Dorsolateral prefrontal cortex (tissue), 120 donors: ENCODE measurements at regions of chr5 and their contacts with region 1.

Region 1: DNA sequence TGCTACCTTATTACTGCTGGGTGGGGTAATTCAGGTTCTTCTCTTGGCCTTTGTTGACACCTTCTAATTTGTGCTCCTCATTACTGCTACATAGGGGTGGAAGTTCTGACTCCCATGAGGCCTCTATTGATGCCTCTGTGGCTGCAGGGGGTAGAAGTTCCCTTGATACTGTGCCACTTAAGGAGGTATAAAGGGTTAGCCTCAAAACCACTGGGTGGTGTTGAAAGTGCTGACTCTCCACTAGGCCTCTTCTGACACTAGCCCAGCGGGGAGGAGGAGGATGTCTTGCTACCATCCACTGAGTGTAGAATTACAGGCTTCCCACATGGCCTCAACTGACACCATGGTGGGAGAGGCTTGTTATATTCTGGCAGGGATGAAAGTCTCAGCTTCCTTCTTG is 36.7 kb upstream of the CCDC112 start:
- DNase-seq: no peak
- H3K4me3 ChIP-seq: no peak overlapping the region
- H3K27ac ChIP-seq: peak overlapping the region in 18 of 59 donors; percentile 4 to 86 (median 34)
- H3K27me3 ChIP-seq: no peaks in the 10 kb centered on the region
- CTCF ChIP-seq: no peak

Region 2: GRCh38 chr5:115116001-115116400 is 217.2 kb before region 1 on chr5:
- intact Hi-C with region 1: no loop called
- DNase-seq: no peak
- H3K4me3 ChIP-seq: no peak overlapping the region
- H3K27ac ChIP-seq: no peak overlapping the region
- H3K27me3 ChIP-seq: peaks cover 0 to 2% (median 0%) of the 10 kb centered on the region in 45 donors
- CTCF ChIP-seq: no peak

Region 3: GRCh38 chr5:115507681-115508080 is 174.5 kb after region 1 on chr5:
- intact Hi-C with region 1: loop called in 1 of 2 experiments (anchors 10 kb)
- DNase-seq: no peak
- H3K4me3 ChIP-seq: no peak overlapping the region
- H3K27ac ChIP-seq: peak overlapping the region in 30 of 59 donors; percentile 0 to 79 (median 38)
- H3K27me3 ChIP-seq: no peaks in the 10 kb centered on the region
- CTCF ChIP-seq: no peak